Pancreas (tissue), 10 donors: ENCODE measurements at regions of chr2 and their contacts with region 1.

Region 1: GRCh38 chr2:162221064-162221463 is 22.2 kb downstream of the FAP start:
- DNase-seq: peak; percentile 30 to 88 (median 70)
- ATAC-seq: peak; percentile 84 to 99 (median 96)
- H3K4me3 ChIP-seq: no peak overlapping the region
- H3K27ac ChIP-seq: no peak overlapping the region
- H3K4me1 ChIP-seq: no peaks in the 10 kb centered on the region
- H3K27me3 ChIP-seq: no peaks in the 10 kb centered on the region
- CTCF ChIP-seq: peak; percentile 72 to 84 (median 78)

Region 2: GRCh38 chr2:161250864-161251436 is 970.1 kb before region 1 on chr2:
- intact Hi-C with region 1: no loop called
- DNase-seq: peak in 1 of 6 donors; percentile 27
- ATAC-seq: peak; percentile 87 to 99 (median 92)
- H3K4me3 ChIP-seq: no peak overlapping the region
- H3K27ac ChIP-seq: no peak overlapping the region
- H3K4me1 ChIP-seq: no peaks in the 10 kb centered on the region
- H3K27me3 ChIP-seq: peaks cover 0 to 7% (median 0%) of the 10 kb centered on the region in 4 donors
- CTCF ChIP-seq: peak in 3 of 4 donors; percentile 42 to 48 (median 43)

Region 3: DNA sequence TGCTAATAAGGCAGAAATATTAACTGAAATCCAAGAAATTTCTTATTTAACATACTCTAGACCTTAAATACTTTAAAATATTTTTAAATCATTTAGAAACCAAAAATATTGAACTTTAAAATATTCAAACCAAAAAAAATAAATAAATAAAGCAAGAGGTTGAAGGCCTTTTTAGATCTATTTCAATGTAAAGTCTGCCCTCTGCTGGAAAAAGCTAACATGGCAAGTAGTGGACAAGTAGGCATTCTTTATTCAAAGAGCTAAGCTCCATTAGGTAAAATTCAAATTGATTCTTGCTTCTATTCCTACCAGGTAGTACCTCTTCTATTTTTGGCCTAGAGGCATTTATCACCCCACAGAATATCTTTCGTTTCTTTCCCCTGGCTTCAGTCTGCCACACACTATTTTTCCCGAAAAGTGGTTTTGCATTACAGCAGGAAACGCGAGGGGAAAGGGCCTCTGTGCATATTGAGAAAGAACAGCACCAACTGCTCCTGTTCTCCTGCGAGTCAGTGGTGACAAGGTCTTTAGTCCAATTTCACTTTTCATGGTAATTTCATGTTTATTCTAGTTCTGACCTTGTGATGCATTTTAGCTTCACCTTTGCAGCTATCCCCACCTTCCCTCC is 77.0 kb after region 1 on chr2:
- intact Hi-C with region 1: loop called in 1 of 3 experiments (anchors 5 kb)
- DNase-seq: peak in 3 of 6 donors; percentile 47 to 66 (median 53)
- ATAC-seq: peak; percentile 52 to 87 (median 80)
- H3K4me3 ChIP-seq: no peak overlapping the region
- H3K27ac ChIP-seq: no peak overlapping the region
- H3K4me1 ChIP-seq: peaks cover 0 to 7% (median 4%) of the 10 kb centered on the region in 3 donors
- H3K27me3 ChIP-seq: no peaks in the 10 kb centered on the region
- CTCF ChIP-seq: peak; percentile 53 to 79 (median 73)